OCI-LY7 (cell line): ENCODE measurements at regions of chr7 and their contacts with region 1.

Region 1: GRCh38 chr7:136353287-136353686 is 376.1 kb upstream of the MTPN start:
- DNase-seq: peak; percentile 78
- H3K4me3 ChIP-seq: peak overlapping the region; percentile 30
- H3K27ac ChIP-seq: peak overlapping the region; percentile 75
- H3K4me1 ChIP-seq: peaks cover 79% of the 10 kb centered on the region
- CTCF ChIP-seq: no peak

Region 2: DNA sequence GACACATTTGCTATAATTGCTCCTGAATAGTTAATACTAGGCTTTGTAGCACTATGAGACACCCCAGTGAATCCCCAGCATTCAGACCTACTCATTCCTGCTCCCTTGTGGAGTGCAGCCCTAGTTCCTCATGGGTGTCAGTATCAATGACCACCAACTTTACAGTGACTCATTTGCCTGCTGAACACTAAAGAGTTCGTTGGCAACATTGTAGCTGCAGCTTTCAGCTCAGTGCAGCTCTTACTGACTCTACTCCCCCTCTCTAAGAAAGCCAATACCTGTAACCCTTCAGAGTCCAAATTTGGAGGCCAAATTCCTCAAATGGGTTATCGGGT is 249.1 kb before region 1 on chr7:
- CTCF ChIA-PET with region 1: no interaction called
- POLR2A ChIA-PET with region 1: no interaction called
- intact Hi-C with region 1: no loop called
- DNase-seq: no peak
- H3K4me3 ChIP-seq: no peak overlapping the region
- H3K27ac ChIP-seq: no peak overlapping the region
- H3K4me1 ChIP-seq: peaks cover 7% of the 10 kb centered on the region
- CTCF ChIP-seq: no peak

Region 3: GRCh38 chr7:136134503-136134902 is 218.8 kb before region 1 on chr7:
- CTCF ChIA-PET with region 1: no interaction called
- POLR2A ChIA-PET with region 1: no interaction called
- intact Hi-C with region 1: no loop called
- DNase-seq: no peak
- H3K4me3 ChIP-seq: no peak overlapping the region
- H3K27ac ChIP-seq: no peak overlapping the region
- H3K4me1 ChIP-seq: no peaks in the 10 kb centered on the region
- CTCF ChIP-seq: no peak

Region 4: GRCh38 chr7:136339464-136339863 is 13.8 kb before region 1 on chr7:
- CTCF ChIA-PET with region 1: interaction called, 3 read pairs
- POLR2A ChIA-PET with region 1: interaction called, 12 read pairs
- intact Hi-C with region 1: no loop called
- DNase-seq: no peak
- H3K4me3 ChIP-seq: no peak overlapping the region
- H3K27ac ChIP-seq: no peak overlapping the region
- H3K4me1 ChIP-seq: no peaks in the 10 kb centered on the region
- CTCF ChIP-seq: no peak

Region 5: DNA sequence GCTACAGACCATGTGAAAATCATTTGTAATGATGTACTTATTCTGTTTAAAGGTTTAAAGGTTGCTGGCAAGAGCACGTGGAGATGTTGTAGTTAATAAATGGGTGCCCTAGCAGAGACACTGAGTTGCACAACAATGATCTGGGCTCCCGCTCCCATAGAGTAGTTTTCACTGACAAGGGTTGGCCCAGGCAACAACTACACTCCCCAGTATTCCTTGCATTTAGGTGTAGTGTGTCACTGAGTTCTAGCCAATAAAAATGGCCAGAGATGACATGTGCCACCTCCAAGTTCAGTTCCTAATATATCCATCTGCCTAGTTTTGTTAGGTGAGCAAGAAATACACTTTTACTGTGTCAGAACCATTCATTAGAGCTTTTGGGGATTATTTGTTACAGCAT is 15.9 kb after region 1 on chr7:
- CTCF ChIA-PET with region 1: no interaction called
- POLR2A ChIA-PET with region 1: interaction called, 11 read pairs
- intact Hi-C with region 1: no loop called
- DNase-seq: no peak
- H3K4me3 ChIP-seq: no peak overlapping the region
- H3K27ac ChIP-seq: no peak overlapping the region
- H3K4me1 ChIP-seq: peaks cover 26% of the 10 kb centered on the region
- CTCF ChIP-seq: no peak